ENCODE measurements at regions of chr5 and their contacts with region 1.

Region 1: DNA sequence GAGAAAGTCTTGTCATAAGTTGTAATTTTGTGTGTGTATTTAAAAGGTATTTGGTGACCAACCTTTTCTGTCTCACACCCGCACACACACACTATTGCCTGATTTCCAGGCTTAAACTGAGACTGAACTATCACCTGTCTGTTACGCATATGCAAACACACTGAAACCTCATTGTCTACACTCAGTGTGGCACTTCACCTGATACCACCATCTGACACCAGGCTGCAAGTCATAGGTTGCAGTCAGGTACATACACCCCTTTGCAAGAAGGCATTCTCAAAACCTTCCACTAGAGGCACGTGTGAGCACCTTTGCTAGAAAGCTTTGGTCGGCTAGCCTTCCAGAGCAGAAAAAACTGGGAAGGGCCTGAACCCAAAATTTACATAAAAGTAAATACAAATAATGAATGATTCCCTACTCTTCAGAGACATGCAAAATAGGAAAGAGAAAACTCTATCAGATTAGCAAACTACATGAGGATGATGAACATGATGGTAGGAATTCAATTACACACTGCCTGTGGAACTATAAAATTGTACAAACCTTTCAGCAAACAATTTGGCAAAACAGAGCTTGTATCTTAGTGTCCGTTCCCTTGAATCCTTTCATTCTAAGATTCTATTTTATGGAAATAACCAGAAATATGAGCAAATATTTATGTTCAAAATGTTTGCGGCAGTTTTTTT is 5.9 kb upstream of the FOXD1 start:
- DNase-seq: peak in 4 of 9 donors; percentile 42 to 49 (median 45)
- ATAC-seq: peak; percentile 86
- H3K4me3 ChIP-seq: no peak overlapping the region
- H3K4me3 Mint-ChIP-seq: no peak overlapping the region
- H3K27ac ChIP-seq: no peak overlapping the region
- H3K27ac Mint-ChIP-seq: no peak overlapping the region
- H3K4me1 ChIP-seq: peaks cover 0 to 4% of the 10 kb centered on the region in 2 donors
- H3K4me1 Mint-ChIP-seq: peaks cover 2 to 12% (median 7%) of the 10 kb centered on the region in 7 donors
- H3K27me3 ChIP-seq: peaks cover 35 to 49% of the 10 kb centered on the region in 2 donors
- H3K27me3 Mint-ChIP-seq: peaks cover 75 to 84% (median 80%) of the 10 kb centered on the region in 5 donors

Region 2: DNA sequence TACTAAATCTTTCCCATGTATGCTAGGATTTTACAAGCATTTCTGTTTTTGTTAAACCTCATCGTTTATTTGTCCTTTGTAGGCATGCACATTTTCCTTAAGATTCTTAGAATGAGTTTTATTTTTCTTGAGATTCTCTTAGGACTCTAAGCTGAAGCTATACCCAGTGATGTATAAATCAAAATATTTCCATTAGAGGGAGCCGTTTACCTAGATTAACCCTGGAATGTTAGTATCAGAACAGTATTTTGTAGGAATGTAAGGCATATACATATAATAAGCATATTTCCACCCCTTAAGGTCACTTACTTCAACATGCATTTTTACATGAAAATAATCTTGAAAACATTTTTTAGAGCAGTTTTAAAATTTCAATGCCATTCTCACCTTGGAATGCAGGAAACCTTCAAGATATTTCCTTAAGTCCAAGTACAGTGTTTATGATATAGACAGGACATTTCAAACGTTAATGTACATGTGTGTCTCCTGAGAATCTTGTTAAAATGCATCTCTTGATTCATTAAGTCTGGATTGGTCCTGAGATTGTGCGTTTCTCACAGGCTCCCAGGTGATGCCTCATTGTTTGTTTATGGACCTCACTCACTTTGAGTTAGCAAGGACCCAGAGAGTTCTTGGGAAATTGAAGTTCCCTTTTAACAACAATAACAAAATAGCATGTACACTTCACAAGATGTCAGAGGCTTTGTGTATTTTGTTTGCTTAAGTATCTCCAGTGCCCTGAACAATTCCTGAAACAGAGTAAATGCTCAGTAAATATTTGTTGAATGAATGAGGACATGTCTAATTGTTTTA is 533.6 kb before region 1 on chr5:
- CTCF ChIA-PET with region 1: no interaction called
- POLR2A ChIA-PET with region 1: no interaction called
- intact Hi-C with region 1: loop called (anchors 2 to 5 kb)
- DNase-seq: peak in 1 of 9 donors; percentile 1
- ATAC-seq: peak; percentile 50
- H3K4me3 ChIP-seq: no peak overlapping the region
- H3K4me3 Mint-ChIP-seq: no peak overlapping the region
- H3K27ac ChIP-seq: no peak overlapping the region
- H3K27ac Mint-ChIP-seq: no peak overlapping the region
- H3K4me1 ChIP-seq: no peaks in the 10 kb centered on the region
- H3K4me1 Mint-ChIP-seq: peaks cover 0 to 1% (median 0%) of the 10 kb centered on the region in 7 donors
- H3K27me3 ChIP-seq: no peaks in the 10 kb centered on the region
- H3K27me3 Mint-ChIP-seq: no peaks in the 10 kb centered on the region

Region 3: DNA sequence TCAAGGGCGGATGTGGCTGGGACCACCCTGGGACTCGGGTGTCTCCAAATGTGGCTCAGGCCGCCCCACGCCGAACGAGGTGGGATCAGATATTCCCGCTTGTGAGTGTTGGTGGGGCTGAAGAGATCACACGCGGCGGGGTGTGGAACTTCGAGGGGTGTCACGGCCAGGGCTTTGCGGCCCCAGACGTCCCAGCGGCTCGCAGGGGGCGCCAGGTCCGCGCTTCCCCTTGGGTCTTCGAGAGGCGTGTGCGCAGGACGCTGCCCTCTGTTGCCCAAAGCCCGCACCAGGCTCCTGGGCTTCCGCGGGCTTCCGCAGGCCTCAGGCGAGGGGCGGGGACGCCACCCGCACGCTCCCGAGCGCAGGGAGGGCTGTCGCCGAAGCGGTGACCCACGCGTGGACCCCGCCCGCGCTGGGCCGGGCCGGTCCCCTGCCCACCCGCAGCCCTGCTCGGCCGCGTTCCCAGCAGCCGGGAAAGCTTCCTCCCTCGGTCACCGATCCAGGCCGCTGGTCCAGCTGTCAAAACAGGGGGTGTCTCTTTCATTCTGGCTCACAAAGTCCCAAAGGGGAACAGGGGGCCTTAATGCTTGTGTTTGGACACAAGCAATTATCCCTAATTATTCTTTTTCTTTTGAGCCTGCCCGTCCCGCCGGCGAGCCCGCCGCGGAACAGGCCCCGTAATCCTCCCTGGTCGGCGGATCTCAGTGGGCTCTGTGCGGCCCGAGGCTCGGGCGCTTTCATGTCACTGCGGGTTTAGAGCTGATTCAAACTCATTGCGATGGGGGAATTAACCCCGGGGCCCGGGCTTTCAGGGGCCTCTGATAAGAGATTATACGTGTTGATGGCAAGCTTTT is 220.9 kb before region 1 on chr5:
- CTCF ChIA-PET with region 1: no interaction called
- POLR2A ChIA-PET with region 1: no interaction called
- intact Hi-C with region 1: loop called (anchors 5 kb)
- DNase-seq: no peak
- ATAC-seq: no peak
- H3K4me3 ChIP-seq: peak overlapping the region; percentile 41
- H3K4me3 Mint-ChIP-seq: peak overlapping the region in 9 of 10 donors; percentile 59 to 85 (median 74)
- H3K27ac ChIP-seq: no peak overlapping the region
- H3K27ac Mint-ChIP-seq: no peak overlapping the region
- H3K4me1 ChIP-seq: peaks cover 3 to 18% of the 10 kb centered on the region in 2 donors
- H3K4me1 Mint-ChIP-seq: peaks cover 0 to 33% (median 28%) of the 10 kb centered on the region in 7 donors
- H3K27me3 ChIP-seq: peaks cover 4 to 41% of the 10 kb centered on the region in 2 donors
- H3K27me3 Mint-ChIP-seq: peaks cover 69 to 83% (median 80%) of the 10 kb centered on the region in 5 donors

Region 4: DNA sequence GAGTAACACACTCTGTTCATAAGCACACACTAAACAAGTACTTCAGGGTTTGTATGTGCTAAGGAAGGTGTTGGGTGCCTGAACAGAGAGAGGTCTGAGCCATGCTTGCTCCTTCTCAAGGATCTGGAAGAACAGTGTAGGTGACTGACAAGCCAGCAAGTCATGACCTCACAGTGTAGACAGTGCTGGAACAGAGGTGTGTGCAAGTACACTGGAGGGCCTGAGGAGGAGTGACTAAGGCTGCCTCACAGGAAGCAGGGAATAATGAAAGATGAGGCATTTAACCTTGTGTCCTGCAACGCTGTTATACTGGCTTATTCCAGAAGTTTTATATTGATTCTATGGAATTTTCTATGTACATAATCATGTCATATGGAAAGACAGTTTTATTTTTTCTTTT is 197.6 kb before region 1 on chr5:
- CTCF ChIA-PET with region 1: no interaction called
- POLR2A ChIA-PET with region 1: no interaction called
- intact Hi-C with region 1: no loop called
- DNase-seq: no peak
- ATAC-seq: no peak
- H3K4me3 ChIP-seq: no peak overlapping the region
- H3K4me3 Mint-ChIP-seq: no peak overlapping the region
- H3K27ac ChIP-seq: no peak overlapping the region
- H3K27ac Mint-ChIP-seq: no peak overlapping the region
- H3K4me1 ChIP-seq: no peaks in the 10 kb centered on the region
- H3K4me1 Mint-ChIP-seq: no peaks in the 10 kb centered on the region
- H3K27me3 ChIP-seq: no peaks in the 10 kb centered on the region
- H3K27me3 Mint-ChIP-seq: peaks cover 24 to 75% (median 62%) of the 10 kb centered on the region in 5 donors

Region 5: GRCh38 chr5:73312146-73312871 is 142.2 kb before region 1 on chr5:
- CTCF ChIA-PET with region 1: no interaction called
- POLR2A ChIA-PET with region 1: no interaction called
- intact Hi-C with region 1: loop called in 1 of 2 experiments (anchors 5 kb)
- DNase-seq: peak in 3 of 9 donors; percentile 18 to 25 (median 24)
- ATAC-seq: peak; percentile 31
- H3K4me3 ChIP-seq: no peak overlapping the region
- H3K4me3 Mint-ChIP-seq: peak overlapping the region in 1 of 10 donors; percentile 11
- H3K27ac ChIP-seq: no peak overlapping the region
- H3K27ac Mint-ChIP-seq: no peak overlapping the region
- H3K4me1 ChIP-seq: peaks cover 0 to 3% of the 10 kb centered on the region in 2 donors
- H3K4me1 Mint-ChIP-seq: peaks cover 0 to 9% (median 3%) of the 10 kb centered on the region in 7 donors
- H3K27me3 ChIP-seq: peaks cover 8 to 18% of the 10 kb centered on the region in 2 donors
- H3K27me3 Mint-ChIP-seq: peaks cover 76 to 84% (median 81%) of the 10 kb centered on the region in 5 donors

Region 6: DNA sequence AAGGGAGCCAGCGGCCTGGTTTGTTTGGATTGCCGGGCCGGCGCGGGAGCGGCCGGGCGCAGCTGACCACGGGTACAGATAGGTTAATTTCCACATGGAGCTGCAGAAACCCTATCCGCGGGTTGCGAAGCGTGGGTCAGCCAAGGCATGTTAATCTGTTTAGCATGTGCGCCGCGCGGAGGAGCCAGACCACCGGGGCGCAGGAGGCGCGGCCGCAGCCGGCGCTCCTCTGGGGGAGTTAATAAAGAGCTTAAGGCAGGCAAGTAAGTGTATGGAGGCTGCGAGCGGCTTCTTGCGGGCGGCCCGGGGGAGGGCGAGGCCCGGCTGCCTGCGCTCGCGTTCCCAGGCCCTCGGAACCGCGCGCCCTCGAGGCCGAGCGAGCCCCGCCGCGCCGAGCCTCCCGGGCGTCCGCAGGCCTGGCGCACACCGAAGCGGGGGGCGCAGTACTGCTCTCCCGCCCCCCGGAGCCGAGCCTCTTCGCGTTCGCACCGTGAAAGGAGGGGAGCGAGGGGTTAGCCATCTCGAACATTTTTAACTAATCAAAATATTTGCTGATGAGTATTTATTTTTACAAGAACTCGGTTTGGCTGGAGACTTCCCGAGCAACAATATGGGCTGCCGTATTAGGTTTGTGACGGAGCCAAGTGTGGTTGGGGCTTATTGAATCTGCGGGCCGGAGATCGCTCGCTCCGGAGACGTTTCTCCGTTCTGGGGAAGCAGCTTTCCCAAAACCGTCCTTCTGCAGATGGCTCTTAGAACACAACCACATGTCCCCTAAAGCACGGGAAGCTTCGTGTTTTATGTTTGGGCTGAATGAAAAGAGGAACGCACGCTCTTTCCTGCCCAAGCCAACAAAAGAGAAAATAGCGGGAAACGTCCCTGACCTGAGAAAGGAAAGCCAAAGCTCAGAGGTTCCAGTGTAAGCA is 34.8 kb before region 1 on chr5:
- CTCF ChIA-PET with region 1: no interaction called
- POLR2A ChIA-PET with region 1: no interaction called
- intact Hi-C with region 1: loop called in 1 of 2 experiments (anchors 5 kb)
- DNase-seq: no peak
- ATAC-seq: no peak
- H3K4me3 ChIP-seq: no peak overlapping the region
- H3K4me3 Mint-ChIP-seq: peak overlapping the region in 9 of 10 donors; percentile 17 to 78 (median 46)
- H3K27ac ChIP-seq: no peak overlapping the region
- H3K27ac Mint-ChIP-seq: no peak overlapping the region
- H3K4me1 ChIP-seq: peaks cover 3 to 8% of the 10 kb centered on the region in 2 donors
- H3K4me1 Mint-ChIP-seq: peaks cover 3 to 18% (median 14%) of the 10 kb centered on the region in 7 donors
- H3K27me3 ChIP-seq: peaks cover 20 to 28% of the 10 kb centered on the region in 2 donors
- H3K27me3 Mint-ChIP-seq: peaks cover 82 to 94% (median 90%) of the 10 kb centered on the region in 5 donors